Naive thymus-derived CD4-positive, alpha-beta T cell (primary cell): ENCODE measurements at regions of chr1 and their contacts with region 1.

Region 1: DNA sequence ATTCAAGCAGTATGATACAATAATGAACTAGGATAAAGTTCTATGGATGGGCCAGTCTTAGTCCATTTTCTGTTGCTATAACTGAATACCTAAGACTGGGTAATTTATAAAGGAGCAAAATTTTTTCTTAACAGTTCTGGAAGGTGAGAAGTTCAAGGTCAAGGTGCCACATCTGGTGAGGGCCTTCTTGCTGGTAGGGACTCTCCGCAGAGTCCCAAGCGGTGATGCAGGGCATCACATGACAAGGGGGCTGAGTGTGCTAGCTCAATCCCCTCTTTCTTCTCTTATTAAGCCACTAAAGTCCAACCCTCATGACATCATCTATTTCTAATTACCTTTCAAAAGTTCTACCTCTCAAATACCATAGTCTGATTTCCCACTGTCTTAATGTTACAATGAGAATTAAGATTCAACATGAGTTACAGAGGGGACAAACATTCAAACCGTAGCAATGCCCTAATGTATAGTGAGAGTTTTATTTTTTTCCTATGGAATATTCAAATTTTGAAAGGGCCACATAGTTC is 92.2 kb upstream of the QSOX1 start:
- DNase-seq: no peak
- ATAC-seq: no peak
- H3K4me3 ChIP-seq: no peak overlapping the region
- H3K4me3 Mint-ChIP-seq: no peak overlapping the region
- H3K27ac ChIP-seq: no peak overlapping the region
- H3K27ac Mint-ChIP-seq: no peak overlapping the region
- H3K4me1 ChIP-seq: no peaks in the 10 kb centered on the region
- H3K4me1 Mint-ChIP-seq: peaks cover 0 to 4% (median 0%) of the 10 kb centered on the region in 7 donors
- H3K27me3 ChIP-seq: no peaks in the 10 kb centered on the region
- H3K27me3 Mint-ChIP-seq: no peaks in the 10 kb centered on the region

Region 2: GRCh38 chr1:180020017-180020416 is 42.5 kb before region 1 on chr1:
- CTCF ChIA-PET with region 1: no interaction called
- POLR2A ChIA-PET with region 1: interaction called, 3 read pairs
- intact Hi-C with region 1: loop called in 1 of 2 experiments (anchors 5 kb)
- DNase-seq: no peak
- ATAC-seq: no peak
- H3K4me3 ChIP-seq: no peak overlapping the region
- H3K4me3 Mint-ChIP-seq: no peak overlapping the region
- H3K27ac ChIP-seq: no peak overlapping the region
- H3K27ac Mint-ChIP-seq: peak overlapping the region in 2 of 9 donors; percentile 10 to 44
- H3K4me1 ChIP-seq: no peaks in the 10 kb centered on the region
- H3K4me1 Mint-ChIP-seq: no peaks in the 10 kb centered on the region
- H3K27me3 ChIP-seq: no peaks in the 10 kb centered on the region
- H3K27me3 Mint-ChIP-seq: no peaks in the 10 kb centered on the region

Region 3: DNA sequence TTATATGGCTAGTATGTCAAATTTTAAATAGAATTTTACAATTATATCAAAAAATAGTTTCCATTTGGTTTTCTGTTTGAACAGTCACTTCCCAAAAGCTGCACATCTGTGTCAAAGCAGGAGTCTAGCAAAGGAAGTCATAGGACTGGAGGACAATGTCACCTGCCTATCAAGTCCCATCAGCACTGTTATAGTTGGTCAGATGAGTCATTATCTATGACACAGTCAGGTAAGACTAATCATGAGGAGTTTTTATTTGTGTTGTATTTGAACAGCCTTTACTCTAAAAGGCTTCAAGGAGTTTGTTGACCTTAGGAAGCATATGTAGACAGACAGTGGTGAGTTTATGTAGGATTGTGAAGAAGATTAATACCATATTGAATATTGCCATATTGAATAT is 17.9 kb after region 1 on chr1:
- CTCF ChIA-PET with region 1: no interaction called
- POLR2A ChIA-PET with region 1: no interaction called
- intact Hi-C with region 1: no loop called
- DNase-seq: no peak
- ATAC-seq: no peak
- H3K4me3 ChIP-seq: no peak overlapping the region
- H3K4me3 Mint-ChIP-seq: no peak overlapping the region
- H3K27ac ChIP-seq: no peak overlapping the region
- H3K27ac Mint-ChIP-seq: no peak overlapping the region
- H3K4me1 ChIP-seq: no peaks in the 10 kb centered on the region
- H3K4me1 Mint-ChIP-seq: no peaks in the 10 kb centered on the region
- H3K27me3 ChIP-seq: no peaks in the 10 kb centered on the region
- H3K27me3 Mint-ChIP-seq: no peaks in the 10 kb centered on the region

Region 4: DNA sequence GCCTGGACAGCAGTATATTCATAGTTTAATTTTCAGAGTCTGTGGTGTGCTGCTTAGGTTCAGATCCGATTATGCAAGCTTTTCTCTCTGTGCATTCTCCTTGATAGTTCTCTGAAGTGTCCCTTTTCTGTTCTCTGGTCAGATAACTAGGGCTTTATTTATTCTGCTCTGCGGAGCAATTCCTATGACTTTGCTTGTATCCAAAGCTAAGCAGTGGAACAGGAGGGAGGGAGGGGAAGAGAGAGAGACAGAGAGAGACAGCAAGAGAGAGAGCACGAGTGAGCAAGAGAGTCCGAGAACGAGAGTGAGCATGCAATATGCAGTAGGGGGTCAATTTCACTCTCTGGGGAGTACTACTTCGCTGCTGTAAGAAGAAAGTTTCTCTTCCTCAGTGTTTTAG is 682.6 kb after region 1 on chr1:
- CTCF ChIA-PET with region 1: no interaction called
- POLR2A ChIA-PET with region 1: no interaction called
- intact Hi-C with region 1: no loop called
- DNase-seq: no peak
- ATAC-seq: no peak
- H3K4me3 ChIP-seq: no peak overlapping the region
- H3K4me3 Mint-ChIP-seq: no peak overlapping the region
- H3K27ac ChIP-seq: no peak overlapping the region
- H3K27ac Mint-ChIP-seq: no peak overlapping the region
- H3K4me1 ChIP-seq: no peaks in the 10 kb centered on the region
- H3K4me1 Mint-ChIP-seq: peaks cover 0 to 8% (median 3%) of the 10 kb centered on the region in 7 donors
- H3K27me3 ChIP-seq: no peaks in the 10 kb centered on the region
- H3K27me3 Mint-ChIP-seq: no peaks in the 10 kb centered on the region